Activated B cell treated with CpG ODN at 0.5 μM for 24 hours (primary cell): ENCODE measurements at regions of chr17 and their contacts with region 1.

Region 1: GRCh38 chr17:44324571-44325275 is at the start of gene SLC25A39:
- DNase-seq: peak; percentile 99
- ATAC-seq: peak; percentile 74
- H3K4me3 Mint-ChIP-seq: peak within 1 kb of the TSS; percentile 91
- H3K27ac Mint-ChIP-seq: peak within 1 kb of the TSS; percentile 96
- H3K4me1 Mint-ChIP-seq: peaks cover 33% of the 10 kb centered on the region
- H3K27me3 Mint-ChIP-seq: no peaks in the 10 kb centered on the region
- CTCF ChIP-seq: no peak
- total RNA-seq, gene SLC25A39: 119 and 129 TPM in 2 replicates

Region 2: DNA sequence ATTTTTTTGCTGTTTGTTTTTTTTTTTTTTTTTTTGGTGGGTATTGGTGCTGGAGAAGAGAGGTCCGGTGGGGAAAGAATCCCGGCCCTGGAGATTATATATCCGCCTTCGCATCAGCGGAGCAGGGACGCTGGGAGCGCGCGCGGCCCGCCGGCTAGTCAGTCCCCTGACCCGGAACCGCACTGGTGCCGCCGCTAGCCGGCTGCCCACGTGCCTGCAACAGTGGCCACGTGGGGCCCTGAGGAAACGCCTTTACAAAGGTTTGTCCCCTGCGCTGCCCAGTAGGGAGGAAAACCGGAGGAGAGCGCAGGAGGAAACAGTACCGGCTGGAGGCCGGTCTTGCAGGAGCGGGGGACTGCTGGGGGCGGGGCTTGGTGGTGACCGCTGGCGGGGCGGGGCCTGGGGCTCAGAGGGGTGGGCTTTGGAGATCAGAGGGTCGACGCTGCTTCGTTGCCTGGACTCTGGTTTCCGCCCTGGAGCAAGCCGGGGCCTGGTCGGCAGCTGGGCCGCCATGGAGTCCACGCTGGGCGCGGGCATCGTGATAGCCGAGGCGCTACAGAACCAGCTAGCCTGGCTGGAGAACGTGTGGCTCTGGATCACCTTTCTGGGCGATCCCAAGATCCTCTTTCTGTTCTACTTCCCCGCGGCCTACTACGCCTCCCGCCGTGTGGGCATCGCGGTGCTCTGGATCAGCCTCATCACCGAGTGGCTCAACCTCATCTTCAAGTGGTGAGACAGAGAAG is 254.1 kb before region 1 on chr17 and contains the start of gene G6PC3:
- CTCF ChIA-PET with region 1: no interaction called
- POLR2A ChIA-PET with region 1: no interaction called
- intact Hi-C with region 1: loop called (anchors 1 kb)
- DNase-seq: peak; percentile 73
- ATAC-seq: peak; percentile 73
- H3K4me3 Mint-ChIP-seq: peak within 1 kb of the TSS; percentile 97
- H3K27ac Mint-ChIP-seq: peak within 1 kb of the TSS; percentile 95
- H3K4me1 Mint-ChIP-seq: peaks cover 44% of the 10 kb centered on the region
- H3K27me3 Mint-ChIP-seq: no peaks in the 10 kb centered on the region
- CTCF ChIP-seq: no peak
- total RNA-seq, gene G6PC3: 30.9 and 35.2 TPM in 2 replicates

Region 3: GRCh38 chr17:44141717-44142285 is 182.9 kb before region 1 on chr17 and contains the start of gene HROB:
- CTCF ChIA-PET with region 1: no interaction called
- POLR2A ChIA-PET with region 1: no interaction called
- intact Hi-C with region 1: loop called (anchors 1 kb)
- DNase-seq: peak; percentile 96
- ATAC-seq: peak; percentile 98
- H3K4me3 Mint-ChIP-seq: peak within 1 kb of the TSS; percentile 84
- H3K27ac Mint-ChIP-seq: peak within 1 kb of the TSS; percentile 70
- H3K4me1 Mint-ChIP-seq: peaks cover 15% of the 10 kb centered on the region
- H3K27me3 Mint-ChIP-seq: peaks cover 8% of the 10 kb centered on the region
- CTCF ChIP-seq: no peak
- total RNA-seq, gene HROB: 2.2 and 5.0 TPM in 2 replicates

Region 4: DNA sequence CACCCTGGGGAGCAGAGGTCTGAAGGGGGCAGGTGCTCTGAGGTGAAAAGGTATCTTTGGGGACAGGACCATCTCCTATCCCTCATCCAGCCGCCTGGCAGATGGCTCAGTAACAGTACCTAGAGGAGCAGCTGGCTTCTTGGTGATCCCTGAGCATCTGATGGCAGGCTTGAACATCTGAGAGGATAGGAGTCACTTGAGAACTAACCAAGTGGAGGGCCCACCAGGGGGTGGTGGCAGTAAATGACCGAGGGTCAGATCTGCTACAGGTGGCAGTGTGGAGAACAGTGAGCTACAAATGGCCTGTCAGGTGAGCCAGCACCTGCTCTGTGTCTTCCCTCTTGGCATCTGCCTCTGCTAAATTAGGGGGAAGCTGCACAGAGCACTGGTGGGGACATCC is 169.2 kb before region 1 on chr17:
- CTCF ChIA-PET with region 1: no interaction called
- POLR2A ChIA-PET with region 1: no interaction called
- intact Hi-C with region 1: no loop called
- DNase-seq: no peak
- ATAC-seq: no peak
- H3K4me3 Mint-ChIP-seq: no peak overlapping the region
- H3K27ac Mint-ChIP-seq: no peak overlapping the region
- H3K4me1 Mint-ChIP-seq: no peaks in the 10 kb centered on the region
- H3K27me3 Mint-ChIP-seq: no peaks in the 10 kb centered on the region
- CTCF ChIP-seq: no peak

Region 5: GRCh38 chr17:44210342-44211192 is 114.2 kb before region 1 on chr17:
- CTCF ChIA-PET with region 1: interaction called, 45 read pairs
- POLR2A ChIA-PET with region 1: interaction called, 237 read pairs
- intact Hi-C with region 1: loop called (anchors 1 kb)
- DNase-seq: peak; percentile 93
- ATAC-seq: peak; percentile 98
- H3K4me3 Mint-ChIP-seq: peak overlapping the region; percentile 52
- H3K27ac Mint-ChIP-seq: peak overlapping the region; percentile 74
- H3K4me1 Mint-ChIP-seq: peaks cover 55% of the 10 kb centered on the region
- H3K27me3 Mint-ChIP-seq: no peaks in the 10 kb centered on the region
- CTCF ChIP-seq: peak; percentile 73

Region 6: DNA sequence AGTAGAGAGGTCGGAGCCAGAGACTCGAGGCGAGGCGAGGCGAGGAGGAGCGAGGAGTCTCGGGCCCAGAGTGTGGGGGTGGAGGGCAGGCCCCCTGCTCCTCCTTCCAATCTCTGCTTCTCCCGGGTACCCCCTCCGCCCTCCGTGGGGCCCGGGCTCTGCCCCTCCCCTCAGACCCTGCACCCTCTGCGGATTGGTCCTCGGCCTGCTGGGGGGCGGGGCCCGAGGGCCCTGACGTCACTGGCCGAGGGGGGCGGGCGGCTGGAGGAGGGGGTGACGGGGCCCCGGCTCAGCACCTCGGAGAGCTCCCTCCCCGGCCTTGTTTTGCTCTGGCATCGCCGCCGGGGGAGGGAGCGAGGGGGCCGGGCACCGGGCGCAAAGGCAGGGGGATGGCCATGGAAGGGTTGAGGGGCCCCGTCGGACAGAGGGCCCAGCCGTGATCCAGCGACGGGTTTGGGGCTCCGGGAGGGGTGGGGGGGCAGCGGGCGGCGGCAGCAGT is 16.4 kb before region 1 on chr17 and contains the start of gene RUNDC3A:
- CTCF ChIA-PET with region 1: no interaction called
- POLR2A ChIA-PET with region 1: interaction called, 6 read pairs
- intact Hi-C with region 1: loop called (anchors 1 kb)
- DNase-seq: peak; percentile 76
- ATAC-seq: peak; percentile 92
- H3K4me3 Mint-ChIP-seq: peak within 1 kb of the TSS; percentile 44
- H3K27ac Mint-ChIP-seq: no peak within 1 kb of the TSS
- H3K4me1 Mint-ChIP-seq: peaks cover 24% of the 10 kb centered on the region
- H3K27me3 Mint-ChIP-seq: peaks cover 42% of the 10 kb centered on the region
- CTCF ChIP-seq: no peak
- total RNA-seq, gene RUNDC3A: 0.07 and 0.17 TPM in 2 replicates

Region 7: DNA sequence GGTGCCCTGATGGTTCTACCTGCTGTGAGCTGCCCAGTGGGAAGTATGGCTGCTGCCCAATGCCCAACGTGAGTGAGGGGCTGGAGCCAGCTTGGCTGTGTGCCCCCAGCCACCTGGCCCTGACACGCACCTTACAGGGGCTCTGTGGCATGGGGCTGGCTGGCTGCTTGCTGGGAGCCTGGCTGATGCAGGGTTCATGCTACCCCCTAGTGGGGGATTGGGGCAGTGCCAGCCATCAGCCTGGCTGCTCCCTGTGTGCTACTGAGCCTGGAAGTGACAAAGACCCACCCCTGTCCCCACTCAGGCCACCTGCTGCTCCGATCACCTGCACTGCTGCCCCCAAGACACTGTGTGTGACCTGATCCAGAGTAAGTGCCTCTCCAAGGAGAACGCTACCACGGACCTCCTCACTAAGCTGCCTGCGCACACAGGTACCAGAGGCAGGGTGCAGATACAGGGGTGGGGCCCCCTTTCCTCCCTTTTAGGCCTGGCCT is 26.1 kb after region 1 on chr17:
- CTCF ChIA-PET with region 1: interaction called, 38 read pairs
- POLR2A ChIA-PET with region 1: interaction called, 32 read pairs
- intact Hi-C with region 1: loop called (anchors 1 kb)
- DNase-seq: peak; percentile 71
- ATAC-seq: peak; percentile 42
- H3K4me3 Mint-ChIP-seq: no peak overlapping the region
- H3K27ac Mint-ChIP-seq: peak overlapping the region; percentile 65
- H3K4me1 Mint-ChIP-seq: peaks cover 54% of the 10 kb centered on the region
- H3K27me3 Mint-ChIP-seq: no peaks in the 10 kb centered on the region
- CTCF ChIP-seq: no peak